ENCODE measurements at regions of chr5 and their contacts with region 1.

Region 1: GRCh38 chr5:10364186-10364683 is 10.7 kb downstream of the MARCHF6 start:
- DNase-seq: no peak
- ATAC-seq: peak; percentile 55
- H3K4me3 Mint-ChIP-seq: no peak overlapping the region
- H3K27ac Mint-ChIP-seq: no peak overlapping the region
- H3K4me1 Mint-ChIP-seq: peaks cover 7% of the 10 kb centered on the region
- H3K27me3 Mint-ChIP-seq: no peaks in the 10 kb centered on the region

Region 2: GRCh38 chr5:10275991-10276390 is 88.2 kb before region 1 on chr5:
- CTCF ChIA-PET with region 1: interaction called, 12 read pairs
- POLR2A ChIA-PET with region 1: no interaction called
- DNase-seq: no peak
- ATAC-seq: no peak
- H3K4me3 Mint-ChIP-seq: no peak overlapping the region
- H3K27ac Mint-ChIP-seq: no peak overlapping the region
- H3K4me1 Mint-ChIP-seq: peaks cover 21% of the 10 kb centered on the region
- H3K27me3 Mint-ChIP-seq: peaks cover 25% of the 10 kb centered on the region

Region 3: GRCh38 chr5:10283927-10284635 is 80.2 kb before region 1 on chr5:
- CTCF ChIA-PET with region 1: interaction called, 30 read pairs
- POLR2A ChIA-PET with region 1: interaction called, 4 read pairs
- DNase-seq: peak; percentile 82
- ATAC-seq: peak; percentile 98
- H3K4me3 Mint-ChIP-seq: no peak overlapping the region
- H3K27ac Mint-ChIP-seq: no peak overlapping the region
- H3K4me1 Mint-ChIP-seq: peaks cover 14% of the 10 kb centered on the region
- H3K27me3 Mint-ChIP-seq: peaks cover 4% of the 10 kb centered on the region

Region 4: DNA sequence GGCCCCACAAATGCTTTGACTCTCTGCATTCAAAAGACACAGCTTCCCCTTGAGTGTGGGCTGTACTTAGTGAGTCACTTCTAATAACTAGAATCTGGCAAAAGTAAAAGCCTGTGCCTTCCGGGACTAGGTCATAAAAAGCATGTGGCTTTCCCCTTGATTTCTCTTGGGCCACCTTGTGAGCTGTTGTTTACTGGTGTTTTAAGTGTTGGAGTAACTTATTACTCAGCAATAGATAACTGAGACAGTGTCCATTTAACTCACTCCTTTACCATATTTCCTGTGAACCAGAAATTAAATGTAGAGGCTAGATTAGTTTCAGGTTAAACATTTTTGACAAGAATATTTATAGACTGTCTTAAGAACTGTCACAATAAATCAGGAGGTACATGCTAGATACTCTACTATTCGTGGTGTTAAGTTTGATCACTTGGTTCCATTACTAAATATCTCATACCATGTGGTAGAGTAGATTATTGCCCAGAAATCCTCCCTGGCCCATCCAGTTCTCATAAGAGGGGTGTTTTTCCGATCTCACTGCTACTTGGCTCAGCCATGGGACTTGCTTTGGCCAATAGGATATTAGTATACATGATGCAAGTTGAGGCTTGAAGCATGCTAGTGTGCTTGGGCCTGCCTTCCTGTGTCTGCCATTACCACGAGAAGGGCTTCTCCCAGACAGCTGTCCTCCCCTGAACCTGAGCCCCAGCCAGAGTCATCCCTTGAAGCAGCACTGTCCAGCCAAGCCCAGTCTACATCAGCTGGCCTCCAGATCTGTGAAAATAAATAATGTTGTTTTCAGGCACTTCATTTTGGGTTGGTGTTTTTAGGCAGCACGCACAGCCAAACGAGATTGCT is 46.2 kb before region 1 on chr5:
- CTCF ChIA-PET with region 1: no interaction called
- POLR2A ChIA-PET with region 1: no interaction called
- DNase-seq: no peak
- ATAC-seq: no peak
- H3K4me3 Mint-ChIP-seq: no peak overlapping the region
- H3K27ac Mint-ChIP-seq: no peak overlapping the region
- H3K4me1 Mint-ChIP-seq: no peaks in the 10 kb centered on the region
- H3K27me3 Mint-ChIP-seq: peaks cover 4% of the 10 kb centered on the region

Region 5: DNA sequence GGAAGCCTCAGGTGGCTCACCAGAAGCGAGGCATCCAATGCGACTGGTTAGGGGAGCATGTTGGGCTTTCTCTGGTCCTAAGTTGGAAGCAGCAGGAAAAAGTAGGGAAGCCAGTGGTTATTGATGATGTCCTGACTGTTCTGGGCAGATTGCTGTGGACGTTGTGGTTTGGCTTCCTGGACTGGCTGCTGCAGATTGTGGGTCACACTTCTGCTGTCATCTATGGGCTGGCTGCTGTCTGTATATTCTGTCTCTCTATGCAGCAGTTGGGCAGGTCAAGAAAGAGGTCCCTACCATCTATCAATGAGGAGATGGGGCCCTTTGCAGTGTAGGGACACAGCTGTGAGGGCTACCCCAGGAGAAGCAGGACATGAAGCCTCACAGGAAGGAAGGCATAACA is 24.3 kb before region 1 on chr5:
- CTCF ChIA-PET with region 1: no interaction called
- POLR2A ChIA-PET with region 1: no interaction called
- DNase-seq: peak; percentile 9
- ATAC-seq: no peak
- H3K4me3 Mint-ChIP-seq: no peak overlapping the region
- H3K27ac Mint-ChIP-seq: no peak overlapping the region
- H3K4me1 Mint-ChIP-seq: no peaks in the 10 kb centered on the region
- H3K27me3 Mint-ChIP-seq: peaks cover 3% of the 10 kb centered on the region

Region 6: GRCh38 chr5:10353241-10354047 is 10.8 kb before region 1 on chr5 and contains the start of gene MARCHF6:
- CTCF ChIA-PET with region 1: interaction called, 19 read pairs
- POLR2A ChIA-PET with region 1: interaction called, 17 read pairs
- DNase-seq: peak; percentile 96
- ATAC-seq: peak; percentile 92
- H3K4me3 Mint-ChIP-seq: peak within 1 kb of the TSS; percentile 99
- H3K27ac Mint-ChIP-seq: peak within 1 kb of the TSS; percentile 99
- H3K4me1 Mint-ChIP-seq: peaks cover 29% of the 10 kb centered on the region
- H3K27me3 Mint-ChIP-seq: no peaks in the 10 kb centered on the region
- total RNA-seq, gene MARCHF6: 72.2 to 80.5 TPM

Region 7: DNA sequence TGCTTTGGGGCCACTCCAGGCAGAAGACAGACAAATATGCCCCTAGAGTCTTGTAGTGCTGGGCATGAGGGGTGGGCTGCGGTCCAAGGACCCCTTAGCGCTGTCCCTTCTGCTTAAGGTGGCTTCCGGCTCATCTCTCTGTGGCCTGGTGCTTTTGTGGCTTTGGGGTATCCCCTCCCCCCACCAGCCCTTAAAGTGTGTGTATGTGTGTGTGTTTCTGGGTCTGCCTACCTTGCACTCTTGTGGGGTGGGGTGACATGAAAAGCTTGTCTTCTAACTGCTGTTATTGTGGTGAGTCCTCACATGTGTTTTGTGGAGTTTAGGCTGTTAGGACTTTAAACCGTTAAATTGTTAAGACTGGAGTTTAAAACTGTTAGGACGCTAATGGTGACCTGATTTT is 12.8 kb after region 1 on chr5:
- CTCF ChIA-PET with region 1: interaction called, 20 read pairs
- POLR2A ChIA-PET with region 1: no interaction called
- DNase-seq: peak; percentile 48
- ATAC-seq: peak; percentile 39
- H3K4me3 Mint-ChIP-seq: no peak overlapping the region
- H3K27ac Mint-ChIP-seq: peak overlapping the region; percentile 47
- H3K4me1 Mint-ChIP-seq: peaks cover 46% of the 10 kb centered on the region
- H3K27me3 Mint-ChIP-seq: no peaks in the 10 kb centered on the region

Region 8: DNA sequence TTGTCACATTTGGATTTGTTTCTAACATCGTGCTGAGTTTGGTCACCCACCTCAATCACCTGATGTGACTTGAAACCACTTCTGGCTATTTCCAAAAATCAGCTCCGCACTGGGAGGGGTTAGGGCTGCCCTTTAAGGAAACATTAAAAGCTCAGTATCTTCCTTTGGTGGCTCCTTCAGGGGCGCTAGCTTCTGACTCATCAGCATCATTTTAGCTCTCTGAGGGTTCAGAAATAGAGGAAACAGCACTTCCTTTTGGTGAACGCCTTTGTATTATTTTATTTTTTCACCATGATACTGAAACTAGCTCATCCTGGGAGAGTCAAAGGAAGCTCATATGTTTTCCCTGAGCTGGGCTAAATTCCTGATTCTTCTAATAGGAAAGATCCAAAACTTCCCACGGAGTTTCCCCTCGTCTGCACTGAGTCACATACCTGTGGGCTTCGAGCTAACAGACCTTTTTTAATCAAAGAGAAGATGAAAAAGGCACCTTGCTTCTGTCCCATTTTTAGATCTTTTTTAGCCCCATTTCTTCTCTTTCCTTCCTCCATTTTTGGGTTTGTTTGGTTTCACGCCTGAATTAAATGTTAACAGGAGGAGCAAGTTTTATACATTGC is 125.7 kb after region 1 on chr5:
- CTCF ChIA-PET with region 1: no interaction called
- POLR2A ChIA-PET with region 1: no interaction called
- DNase-seq: peak; percentile 49
- ATAC-seq: peak; percentile 67
- H3K4me3 Mint-ChIP-seq: peak overlapping the region; percentile 38
- H3K27ac Mint-ChIP-seq: peak overlapping the region; percentile 70
- H3K4me1 Mint-ChIP-seq: peaks cover 35% of the 10 kb centered on the region
- H3K27me3 Mint-ChIP-seq: peaks cover 3% of the 10 kb centered on the region

Measured in activated CD8-positive, alpha-beta T cell treated with anti-CD3 and anti-CD28 coated beads, Interleukin-2, amount 10 ng/mL, durations not matched to agents 7 days and 5 days (primary cell).